WTC11 (cell line): ENCODE measurements at regions of chr17 and their contacts with region 1.

Region 1: DNA sequence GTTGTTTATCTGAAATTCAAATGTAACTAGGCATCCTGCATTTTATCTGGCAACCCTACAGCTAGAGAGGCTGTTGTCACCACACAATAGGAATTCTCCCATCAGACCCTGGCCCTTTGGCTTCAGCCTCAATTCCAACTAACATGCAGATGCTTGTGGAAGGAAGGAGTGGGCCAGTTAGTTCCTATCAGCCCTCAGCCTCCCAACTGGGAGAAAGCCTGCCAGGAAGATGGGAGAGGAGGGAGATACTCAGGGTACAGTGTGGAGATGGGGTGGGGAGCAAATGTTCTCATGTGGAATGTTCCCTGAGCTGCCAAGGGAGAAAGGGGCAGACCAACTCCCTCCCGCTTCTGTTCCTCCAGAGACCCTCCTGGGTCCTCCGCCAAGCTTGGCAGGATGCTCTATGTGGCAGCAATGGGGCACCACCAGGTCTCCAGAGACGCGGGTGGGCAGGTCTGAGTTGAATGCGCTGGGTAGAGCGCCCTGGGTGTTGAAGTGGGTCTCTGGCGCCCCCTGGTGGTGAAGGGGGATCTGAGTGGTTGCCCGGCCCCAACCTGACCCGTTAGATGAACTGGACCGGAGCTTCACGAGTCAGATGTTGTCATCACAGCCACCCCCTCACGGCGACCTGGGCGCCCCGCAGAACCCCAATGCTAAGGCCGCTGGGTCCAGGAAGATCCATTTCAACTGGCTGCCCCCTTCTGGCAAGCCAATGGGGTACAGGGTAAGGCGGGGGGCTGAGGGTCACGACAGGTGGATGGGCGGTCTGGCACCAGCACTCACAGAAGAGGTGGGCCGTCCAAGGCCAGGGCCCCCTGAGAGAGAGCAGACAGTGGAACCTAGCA is 15.2 kb downstream of the GALK1 start:
- DNase-seq: peak; percentile 91
- ATAC-seq: peak; percentile 67
- H3K4me3 Mint-ChIP-seq: no peak overlapping the region
- H3K27ac Mint-ChIP-seq: no peak overlapping the region
- H3K4me1 Mint-ChIP-seq: peaks cover 4% of the 10 kb centered on the region
- H3K27me3 Mint-ChIP-seq: peaks cover 7% of the 10 kb centered on the region
- CTCF ChIP-seq: peak; percentile 98

Region 2: DNA sequence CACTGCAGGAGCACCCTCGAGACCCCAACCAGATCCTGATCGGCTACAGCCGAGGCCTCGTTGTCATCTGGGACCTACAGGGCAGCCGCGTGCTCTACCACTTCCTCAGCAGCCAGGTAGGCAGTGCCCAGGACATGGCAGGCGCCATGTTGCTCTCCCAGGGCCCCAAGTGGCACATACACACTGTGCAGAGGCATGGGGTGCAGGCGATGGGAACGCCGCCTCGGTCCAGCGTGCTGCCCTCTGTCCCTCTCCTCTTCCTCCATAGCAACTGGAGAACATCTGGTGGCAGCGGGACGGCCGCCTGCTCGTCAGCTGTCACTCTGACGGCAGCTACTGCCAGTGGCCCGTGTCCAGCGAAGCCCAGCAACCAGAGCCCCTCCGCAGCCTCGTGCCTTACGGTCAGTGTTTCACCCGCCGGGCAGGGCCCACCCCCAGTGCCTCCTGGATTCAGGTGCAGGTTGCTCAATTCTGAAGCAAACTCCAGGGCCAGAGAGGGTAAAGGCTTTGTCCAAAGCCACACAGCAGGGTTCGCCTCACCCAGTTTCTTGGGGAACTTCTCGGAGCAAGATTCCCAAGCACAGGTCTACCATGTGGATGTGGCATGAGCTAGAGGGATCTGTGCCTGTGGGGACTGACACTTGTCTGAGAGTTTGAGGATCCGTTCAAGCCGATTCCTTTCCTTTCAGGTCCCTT is 186.6 kb before region 1 on chr17:
- CTCF ChIA-PET with region 1: no interaction called
- POLR2A ChIA-PET with region 1: no interaction called
- DNase-seq: no peak
- ATAC-seq: no peak
- H3K4me3 Mint-ChIP-seq: no peak overlapping the region
- H3K27ac Mint-ChIP-seq: no peak overlapping the region
- H3K4me1 Mint-ChIP-seq: no peaks in the 10 kb centered on the region
- H3K27me3 Mint-ChIP-seq: no peaks in the 10 kb centered on the region
- CTCF ChIP-seq: no peak

Region 3: GRCh38 chr17:75601057-75602051 is 148.4 kb before region 1 on chr17:
- CTCF ChIA-PET with region 1: interaction called, 136 read pairs
- POLR2A ChIA-PET with region 1: no interaction called
- DNase-seq: peak; percentile 94
- ATAC-seq: peak; percentile 96
- H3K4me3 Mint-ChIP-seq: no peak overlapping the region
- H3K27ac Mint-ChIP-seq: no peak overlapping the region
- H3K4me1 Mint-ChIP-seq: no peaks in the 10 kb centered on the region
- H3K27me3 Mint-ChIP-seq: no peaks in the 10 kb centered on the region
- CTCF ChIP-seq: peak; percentile 96

Region 4: DNA sequence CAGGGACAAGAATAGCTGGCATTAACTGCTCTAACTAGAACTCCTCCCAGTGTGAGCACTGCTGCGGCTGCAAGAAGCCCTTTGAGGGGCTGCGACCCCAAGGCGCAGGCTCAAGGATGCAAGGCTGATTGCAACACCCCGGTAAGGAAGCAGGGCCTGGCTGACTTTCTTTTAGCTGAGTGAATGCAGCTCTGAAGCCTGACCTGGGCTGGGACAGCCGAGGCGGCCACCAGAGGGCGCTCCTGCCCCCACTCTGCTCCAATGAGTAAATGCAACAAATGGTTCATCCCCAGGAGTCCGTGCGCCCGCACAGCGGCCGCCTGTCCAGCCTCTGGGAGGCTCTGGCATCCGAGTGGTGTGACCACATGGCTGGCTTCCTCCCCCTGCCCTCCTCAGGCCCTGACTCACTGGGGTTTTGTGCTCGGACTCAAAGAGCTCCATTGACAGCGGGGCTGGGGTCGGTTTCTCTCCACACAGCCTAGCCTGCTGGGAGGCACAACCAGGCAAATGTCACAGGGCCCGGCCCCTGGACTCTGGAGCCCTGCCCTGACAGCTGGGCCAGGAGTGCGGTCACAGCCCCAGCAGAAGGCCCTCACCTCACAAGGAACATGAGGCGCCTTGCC is 116.8 kb before region 1 on chr17 and contains the start of gene SMIM5:
- CTCF ChIA-PET with region 1: interaction called, 190 read pairs
- POLR2A ChIA-PET with region 1: interaction called, 3 read pairs
- DNase-seq: peak; percentile 94
- ATAC-seq: peak; percentile 71
- H3K4me3 Mint-ChIP-seq: peak within 1 kb of the TSS; percentile 24; the same call in 1 of the 2 replicates
- H3K27ac Mint-ChIP-seq: peak within 1 kb of the TSS; percentile 63; the same call in 1 of the 2 replicates
- H3K4me1 Mint-ChIP-seq: peaks cover 11% of the 10 kb centered on the region
- H3K27me3 Mint-ChIP-seq: no peaks in the 10 kb centered on the region
- CTCF ChIP-seq: peak; percentile 94
- total RNA-seq, gene SMIM5: 0.05 TPM in 1 of 3 replicates, not detected in the others

Region 5: DNA sequence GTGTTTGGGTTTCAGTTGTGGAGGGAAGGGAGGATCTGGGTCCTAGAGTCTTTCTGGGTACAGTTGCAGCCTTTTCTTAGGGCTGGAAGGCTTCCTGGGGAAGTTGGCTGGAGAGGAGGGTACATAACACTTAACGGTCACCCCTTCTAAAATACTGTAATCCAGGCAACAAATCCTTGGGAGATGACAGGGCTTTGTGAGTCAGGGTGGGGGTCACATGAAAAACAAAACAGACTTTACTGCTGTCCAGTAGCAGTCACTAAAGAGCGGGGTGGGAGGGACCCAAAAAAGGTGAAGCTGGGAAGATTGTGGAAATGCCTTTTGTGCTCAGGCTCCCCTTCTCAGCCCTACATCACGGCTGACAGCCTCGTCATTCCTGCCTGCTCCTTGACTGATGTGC is 76.3 kb before region 1 on chr17:
- CTCF ChIA-PET with region 1: interaction called, 72 read pairs
- POLR2A ChIA-PET with region 1: no interaction called
- DNase-seq: no peak
- ATAC-seq: no peak
- H3K4me3 Mint-ChIP-seq: no peak overlapping the region
- H3K27ac Mint-ChIP-seq: 0 out of 2 replicates have a peak overlapping the region, but pooled peaks have one; percentile 32
- H3K4me1 Mint-ChIP-seq: peaks cover 1% of the 10 kb centered on the region
- H3K27me3 Mint-ChIP-seq: no peaks in the 10 kb centered on the region
- CTCF ChIP-seq: no peak

Region 6: GRCh38 chr17:75731716-75732498 is 17.9 kb before region 1 on chr17:
- CTCF ChIA-PET with region 1: interaction called, 105 read pairs
- POLR2A ChIA-PET with region 1: no interaction called
- DNase-seq: no peak
- ATAC-seq: no peak
- H3K4me3 Mint-ChIP-seq: no peak overlapping the region
- H3K27ac Mint-ChIP-seq: peak overlapping the region; percentile 36
- H3K4me1 Mint-ChIP-seq: no peaks in the 10 kb centered on the region
- H3K27me3 Mint-ChIP-seq: no peaks in the 10 kb centered on the region
- CTCF ChIP-seq: no peak

Region 7: DNA sequence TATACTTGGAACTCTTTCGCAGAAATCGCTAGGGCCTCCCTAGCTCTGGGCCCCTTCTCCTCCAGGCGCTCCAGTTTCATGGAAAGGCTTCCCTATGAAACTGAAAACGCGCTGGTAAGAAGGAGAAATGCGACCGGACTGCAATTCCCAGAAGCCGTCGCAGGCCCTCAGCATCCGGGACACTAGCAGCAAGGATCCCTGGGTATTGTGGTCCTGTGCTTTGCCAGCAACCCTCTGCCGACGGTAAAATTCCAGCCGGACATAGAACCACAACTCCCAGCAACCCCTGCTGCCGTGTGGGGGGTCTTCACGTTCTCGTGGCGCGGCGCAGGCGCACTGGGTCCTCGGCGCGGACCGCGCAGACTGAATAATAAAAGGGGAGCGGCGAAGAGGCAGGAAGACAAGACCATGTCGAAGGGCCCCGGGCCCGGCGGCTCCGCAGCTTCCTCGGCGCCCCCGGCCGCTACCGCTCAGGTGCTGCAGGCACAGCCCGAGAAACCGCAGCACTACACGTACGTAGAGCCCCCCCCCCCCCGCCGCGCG is 34.8 kb after region 1 on chr17 and contains the start of gene UNK:
- CTCF ChIA-PET with region 1: interaction called, 32 read pairs
- POLR2A ChIA-PET with region 1: interaction called, 7 read pairs
- DNase-seq: peak; percentile 97
- ATAC-seq: peak; percentile 77
- H3K4me3 Mint-ChIP-seq: peak within 1 kb of the TSS; percentile 95
- H3K27ac Mint-ChIP-seq: peak within 1 kb of the TSS; percentile 100
- H3K4me1 Mint-ChIP-seq: peaks cover 34% of the 10 kb centered on the region
- H3K27me3 Mint-ChIP-seq: peaks cover 3% of the 10 kb centered on the region
- CTCF ChIP-seq: no peak
- total RNA-seq, gene UNK: 35.0 to 37.8 TPM (median 35.4 TPM) in 3 replicates